ENCODE measurements at regions of chr1 and their contacts with region 1.

Region 1: DNA sequence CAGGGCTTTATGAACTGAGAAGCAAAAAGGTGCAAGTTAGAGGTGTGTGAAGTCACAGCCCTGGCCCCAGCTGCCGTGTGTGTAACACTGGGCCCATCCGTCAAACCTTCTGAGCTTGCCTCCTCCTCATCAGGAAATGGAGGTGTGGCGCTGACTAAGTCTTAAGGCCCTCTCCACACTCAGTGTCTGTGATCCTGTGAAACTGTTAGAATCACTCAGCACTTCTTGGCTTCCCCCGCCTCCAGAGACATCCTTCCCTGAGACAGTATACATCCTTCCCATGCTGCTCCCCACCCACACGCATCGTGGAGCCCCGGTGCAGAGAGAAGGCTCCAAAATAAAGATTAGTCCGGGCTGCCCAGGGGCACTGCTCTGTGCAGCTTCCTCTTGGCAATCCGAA is 33.3 kb downstream of the LRP8 start:
- DNase-seq: no peak
- ATAC-seq: no peak
- H3K4me3 ChIP-seq: no peak overlapping the region
- H3K27ac ChIP-seq: peak overlapping the region; percentile 77
- H3K4me1 ChIP-seq: peaks cover 51% of the 10 kb centered on the region
- H3K27me3 ChIP-seq: no peaks in the 10 kb centered on the region
- CTCF ChIP-seq: no peak
- EP300 ChIP-seq: no peak
- POLR2A ChIP-seq: no peak
- RAD21 ChIP-seq: no peak

Region 2: GRCh38 chr1:53255031-53255430 is 39.5 kb before region 1 on chr1:
- CTCF ChIA-PET with region 1: no interaction called
- POLR2A ChIA-PET with region 1: no interaction called
- RAD21 ChIA-PET with region 1: no interaction called
- SMC1A ChIA-PET with region 1: no interaction called
- in situ Hi-C with region 1: no loop called
- intact Hi-C with region 1: no loop called
- DNase-seq: no peak
- ATAC-seq: no peak
- H3K4me3 ChIP-seq: no peak overlapping the region
- H3K27ac ChIP-seq: no peak overlapping the region
- H3K4me1 ChIP-seq: peaks cover under 1% of the 10 kb centered on the region
- H3K27me3 ChIP-seq: no peaks in the 10 kb centered on the region
- CTCF ChIP-seq: no peak
- EP300 ChIP-seq: no peak
- POLR2A ChIP-seq: no peak
- RAD21 ChIP-seq: no peak

Region 3: GRCh38 chr1:53315456-53316423 is 21.2 kb after region 1 on chr1:
- CTCF ChIA-PET with region 1: interaction called, 5 read pairs
- POLR2A ChIA-PET with region 1: interaction called, 4 read pairs
- RAD21 ChIA-PET with region 1: interaction called, 9 read pairs
- SMC1A ChIA-PET with region 1: interaction called, 13 read pairs
- in situ Hi-C with region 1: no loop called
- intact Hi-C with region 1: no loop called
- DNase-seq: no peak
- ATAC-seq: peak; percentile 57
- H3K4me3 ChIP-seq: no peak overlapping the region
- H3K27ac ChIP-seq: peak overlapping the region; percentile 46
- H3K4me1 ChIP-seq: peaks cover 13% of the 10 kb centered on the region
- H3K27me3 ChIP-seq: no peaks in the 10 kb centered on the region
- CTCF ChIP-seq: peak in 2 of 3 experiments; percentile 8; a peak in 1 of 6 replicates
- EP300 ChIP-seq: no peak
- POLR2A ChIP-seq: no peak
- RAD21 ChIP-seq: no peak

Region 4: GRCh38 chr1:53326088-53326597 is 31.6 kb after region 1 on chr1:
- CTCF ChIA-PET with region 1: interaction called, 8 read pairs
- POLR2A ChIA-PET with region 1: interaction called, 17 read pairs
- RAD21 ChIA-PET with region 1: interaction called, 16 read pairs
- SMC1A ChIA-PET with region 1: interaction called, 6 read pairs
- in situ Hi-C with region 1: no loop called
- intact Hi-C with region 1: loop called (anchors 2 kb)
- DNase-seq: peak; percentile 73
- ATAC-seq: peak; percentile 95
- H3K4me3 ChIP-seq: peak overlapping the region; percentile 100
- H3K27ac ChIP-seq: peak overlapping the region; percentile 79
- H3K4me1 ChIP-seq: peaks cover 13% of the 10 kb centered on the region
- H3K27me3 ChIP-seq: no peaks in the 10 kb centered on the region
- CTCF ChIP-seq: no peak; a peak in 1 of 6 replicates
- EP300 ChIP-seq: no peak
- POLR2A ChIP-seq: peak; percentile 83
- RAD21 ChIP-seq: no peak

Region 5: DNA sequence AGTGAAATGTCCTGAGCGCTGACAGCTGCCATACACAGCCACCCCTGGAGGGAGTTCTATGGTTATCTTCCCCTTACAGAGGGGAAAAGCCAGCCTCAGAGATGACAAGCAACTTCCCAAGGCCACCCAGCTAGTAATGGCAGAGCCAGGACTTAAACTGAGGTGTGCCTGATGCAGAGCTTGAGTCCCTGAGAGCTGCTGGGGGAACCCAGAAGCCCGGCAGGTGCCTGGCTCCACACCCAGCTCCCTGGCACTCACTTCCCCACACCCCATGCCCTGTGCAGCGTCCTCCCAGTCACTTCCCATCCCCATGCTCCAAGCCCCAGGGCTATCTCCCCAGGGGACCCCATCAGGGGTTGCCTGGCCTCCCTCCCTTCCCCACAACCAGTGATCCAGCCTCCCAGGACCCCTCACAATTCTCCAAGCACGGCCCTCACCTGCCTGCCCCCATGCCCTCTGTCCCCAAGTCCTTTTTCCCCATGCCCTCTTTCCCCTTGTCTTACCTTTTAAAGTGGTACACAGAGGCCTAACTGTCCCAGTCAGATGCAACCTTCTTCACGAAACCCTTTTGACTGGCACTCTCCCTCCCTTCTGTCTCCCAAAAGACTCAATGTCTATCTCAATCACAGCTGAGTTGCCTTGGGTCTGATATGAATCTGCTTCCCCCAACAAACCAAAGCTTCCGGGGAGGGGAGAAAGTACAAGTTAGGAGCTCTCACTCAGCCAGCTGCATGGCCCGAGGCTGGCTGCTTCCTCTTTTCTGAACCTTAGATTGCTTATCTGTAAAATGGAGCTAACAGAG is 73.1 kb after region 1 on chr1:
- CTCF ChIA-PET with region 1: interaction called, 3 read pairs
- POLR2A ChIA-PET with region 1: interaction called, 4 read pairs
- RAD21 ChIA-PET with region 1: interaction called, 9 read pairs
- SMC1A ChIA-PET with region 1: interaction called, 10 read pairs
- in situ Hi-C with region 1: no loop called
- intact Hi-C with region 1: no loop called
- DNase-seq: peak; percentile 64
- ATAC-seq: peak; percentile 96
- H3K4me3 ChIP-seq: peak overlapping the region; percentile 66
- H3K27ac ChIP-seq: peak overlapping the region; percentile 53
- H3K4me1 ChIP-seq: peaks cover 8% of the 10 kb centered on the region
- H3K27me3 ChIP-seq: no peaks in the 10 kb centered on the region
- CTCF ChIP-seq: no peak
- EP300 ChIP-seq: no peak
- POLR2A ChIP-seq: peak; percentile 54; the same call in 1 of the 2 replicates
- RAD21 ChIP-seq: no peak

Region 6: DNA sequence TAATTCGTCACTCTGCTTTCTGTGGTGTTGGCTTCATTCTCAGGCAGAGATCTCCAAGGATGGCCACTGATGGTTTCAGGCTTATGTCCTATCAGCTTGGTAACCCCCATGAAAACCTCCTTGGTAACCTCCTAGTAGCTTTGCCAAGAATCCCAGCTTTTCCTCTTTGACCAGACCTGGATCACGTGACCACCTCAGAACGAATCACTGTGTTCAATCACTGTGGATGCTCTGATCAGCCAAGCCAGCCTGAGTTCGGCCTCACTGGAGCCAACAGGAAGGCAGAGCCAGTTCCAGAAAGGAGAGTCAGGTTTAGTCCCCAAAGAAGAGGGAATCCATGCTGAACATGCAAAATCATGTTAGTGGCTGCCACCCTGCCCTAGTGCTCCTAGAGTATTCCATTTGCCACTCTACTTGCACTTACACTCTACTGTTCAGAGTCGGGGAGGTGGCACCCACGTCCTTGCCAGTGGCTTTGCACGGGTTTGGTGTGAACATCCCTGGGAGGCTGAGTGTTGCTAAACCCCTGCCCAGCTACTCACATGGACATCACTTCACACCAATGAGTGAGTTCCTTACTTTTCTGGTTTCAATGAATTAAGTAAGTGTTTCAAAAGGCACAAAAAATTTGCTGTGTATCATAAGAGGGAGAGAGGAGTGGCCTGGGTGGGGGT is 1145.1 kb after region 1 on chr1:
- CTCF ChIA-PET with region 1: no interaction called
- POLR2A ChIA-PET with region 1: no interaction called
- RAD21 ChIA-PET with region 1: no interaction called
- SMC1A ChIA-PET with region 1: no interaction called
- in situ Hi-C with region 1: no loop called
- intact Hi-C with region 1: no loop called
- DNase-seq: no peak
- ATAC-seq: no peak
- H3K4me3 ChIP-seq: no peak overlapping the region
- H3K27ac ChIP-seq: no peak overlapping the region
- H3K4me1 ChIP-seq: no peaks in the 10 kb centered on the region
- H3K27me3 ChIP-seq: no peaks in the 10 kb centered on the region; a peak in 1 of 4 replicates
- CTCF ChIP-seq: no peak
- EP300 ChIP-seq: no peak
- POLR2A ChIP-seq: no peak
- RAD21 ChIP-seq: no peak

Measured in GM12878 (cell line).